Naive thymus-derived CD4-positive, alpha-beta T cell (primary cell): ENCODE measurements at regions of chr7 and their contacts with region 1.

Region 1: DNA sequence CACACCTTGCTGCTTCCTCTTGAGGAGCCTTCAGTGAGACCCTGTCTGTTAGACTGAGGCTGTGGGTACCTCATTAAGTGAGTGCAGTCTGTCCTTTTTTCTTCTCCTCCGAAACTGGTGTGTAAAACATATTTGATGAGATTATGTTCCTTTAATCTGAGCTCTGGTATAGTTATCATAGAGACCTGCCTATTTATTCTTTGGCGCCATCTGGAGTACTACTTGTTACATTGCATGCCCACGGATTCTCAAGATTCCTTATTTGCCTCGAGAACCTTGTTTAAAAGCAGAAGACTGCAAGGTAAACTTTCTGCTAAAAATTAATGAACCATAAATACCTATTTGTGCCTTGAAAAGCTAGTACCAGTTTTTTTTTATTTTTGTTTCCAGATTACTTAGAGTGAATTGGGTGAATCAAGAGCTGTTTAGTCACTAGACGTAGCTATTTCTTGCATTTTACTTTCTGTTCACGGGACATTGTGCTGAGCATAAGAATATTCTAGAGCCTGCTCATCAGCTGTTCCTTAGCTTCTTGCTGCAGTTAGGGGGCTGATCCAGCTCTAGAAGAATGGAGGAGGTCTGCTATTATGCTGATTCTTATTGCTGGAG is 16.9 kb upstream of the STMP1 start:
- DNase-seq: peak in 7 of 9 donors; percentile 8 to 50 (median 41)
- ATAC-seq: peak; percentile 88
- H3K4me3 ChIP-seq: no peak overlapping the region
- H3K4me3 Mint-ChIP-seq: no peak overlapping the region
- H3K27ac ChIP-seq: no peak overlapping the region
- H3K27ac Mint-ChIP-seq: peak overlapping the region in 4 of 9 donors; percentile 1 to 27 (median 20)
- H3K4me1 ChIP-seq: no peaks in the 10 kb centered on the region
- H3K4me1 Mint-ChIP-seq: peaks cover 0 to 7% (median 0%) of the 10 kb centered on the region in 7 donors
- H3K27me3 ChIP-seq: no peaks in the 10 kb centered on the region
- H3K27me3 Mint-ChIP-seq: no peaks in the 10 kb centered on the region

Region 2: GRCh38 chr7:135077642-135078041 is 567.8 kb before region 1 on chr7:
- CTCF ChIA-PET with region 1: no interaction called
- POLR2A ChIA-PET with region 1: no interaction called
- intact Hi-C with region 1: no loop called
- DNase-seq: no peak
- ATAC-seq: no peak
- H3K4me3 ChIP-seq: no peak overlapping the region
- H3K4me3 Mint-ChIP-seq: no peak overlapping the region
- H3K27ac ChIP-seq: no peak overlapping the region
- H3K27ac Mint-ChIP-seq: no peak overlapping the region
- H3K4me1 ChIP-seq: no peaks in the 10 kb centered on the region
- H3K4me1 Mint-ChIP-seq: peaks cover 0 to 1% (median 0%) of the 10 kb centered on the region in 7 donors
- H3K27me3 ChIP-seq: no peaks in the 10 kb centered on the region
- H3K27me3 Mint-ChIP-seq: no peaks in the 10 kb centered on the region

Region 3: DNA sequence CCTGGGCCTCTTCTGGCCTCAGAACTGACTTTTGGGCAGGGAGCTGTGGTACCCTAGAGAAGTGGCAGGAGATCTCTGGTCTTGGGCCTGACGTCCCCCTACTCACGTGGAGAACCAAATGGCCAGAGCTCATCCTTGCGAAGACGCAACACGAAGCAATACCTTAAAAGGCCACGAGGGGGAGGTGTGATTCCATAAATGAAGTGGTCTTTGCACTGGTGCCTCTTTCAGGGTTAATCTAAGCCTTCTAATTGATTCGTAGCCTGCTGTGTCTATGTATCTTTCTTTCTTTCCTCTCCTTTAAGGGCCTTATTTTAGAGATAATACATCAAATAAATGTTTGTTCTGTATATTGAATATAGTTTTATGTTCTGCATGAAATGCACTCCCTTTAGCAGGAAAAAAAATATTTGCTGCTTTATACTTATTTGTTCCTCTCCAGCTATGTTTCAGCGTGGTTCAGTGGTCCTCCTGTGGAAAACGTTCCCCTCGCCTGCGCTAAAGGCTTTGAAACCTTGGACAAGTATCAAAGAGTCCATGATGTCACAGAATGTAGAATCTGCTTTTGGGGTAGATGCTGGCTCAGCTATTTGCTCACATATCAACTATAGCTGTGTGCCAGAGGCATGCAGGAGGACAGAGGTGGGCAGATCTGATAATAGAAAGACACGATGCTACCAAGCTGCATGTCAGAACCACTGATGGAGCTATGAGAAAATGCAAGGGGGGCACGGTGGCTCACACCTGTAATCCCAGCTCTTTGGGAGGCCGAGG is 370.7 kb before region 1 on chr7:
- CTCF ChIA-PET with region 1: interaction called, 38 read pairs
- POLR2A ChIA-PET with region 1: no interaction called
- intact Hi-C with region 1: loop called in 1 of 2 experiments (anchors 1 kb)
- DNase-seq: peak; percentile 27 to 74 (median 55)
- ATAC-seq: peak; percentile 81
- H3K4me3 ChIP-seq: no peak overlapping the region
- H3K4me3 Mint-ChIP-seq: no peak overlapping the region
- H3K27ac ChIP-seq: no peak overlapping the region
- H3K27ac Mint-ChIP-seq: no peak overlapping the region
- H3K4me1 ChIP-seq: no peaks in the 10 kb centered on the region
- H3K4me1 Mint-ChIP-seq: peaks cover 0 to 4% (median 0%) of the 10 kb centered on the region in 7 donors
- H3K27me3 ChIP-seq: no peaks in the 10 kb centered on the region
- H3K27me3 Mint-ChIP-seq: peaks cover 0 to 8% (median 4%) of the 10 kb centered on the region in 5 donors

Region 4: DNA sequence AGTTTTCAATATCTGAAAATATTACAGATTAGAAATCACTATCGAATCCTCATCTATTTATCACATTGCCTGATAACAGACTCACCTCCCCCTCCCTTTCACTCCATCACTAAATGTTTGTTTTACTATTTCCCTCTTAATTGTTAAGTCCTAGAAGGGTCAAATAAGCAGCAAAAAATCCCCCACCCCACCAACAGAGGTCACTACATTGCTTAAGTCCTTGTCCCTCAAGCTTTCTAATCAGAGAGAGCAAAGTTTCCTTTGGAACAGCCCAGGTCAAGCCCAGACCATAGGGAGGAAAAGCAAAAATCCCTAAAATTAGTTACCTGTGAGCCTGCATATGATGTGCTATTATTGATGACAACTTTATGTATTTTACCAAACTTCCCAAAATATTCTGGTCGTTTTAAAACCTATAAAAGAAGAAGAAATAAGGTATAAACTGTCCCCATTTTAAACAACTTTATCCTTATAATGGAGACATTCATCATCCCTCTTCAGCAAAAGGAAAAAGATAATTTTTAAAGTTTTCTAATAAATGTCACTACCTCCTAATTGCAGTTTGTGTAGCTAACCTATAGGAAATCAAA is 230.5 kb before region 1 on chr7:
- CTCF ChIA-PET with region 1: no interaction called
- POLR2A ChIA-PET with region 1: no interaction called
- intact Hi-C with region 1: loop called in 1 of 2 experiments (anchors 10 kb)
- DNase-seq: peak in 4 of 9 donors; percentile 1 to 7 (median 5)
- ATAC-seq: peak; percentile 49
- H3K4me3 ChIP-seq: no peak overlapping the region
- H3K4me3 Mint-ChIP-seq: no peak overlapping the region
- H3K27ac ChIP-seq: no peak overlapping the region
- H3K27ac Mint-ChIP-seq: no peak overlapping the region
- H3K4me1 ChIP-seq: no peaks in the 10 kb centered on the region
- H3K4me1 Mint-ChIP-seq: peaks cover 0 to 19% (median 5%) of the 10 kb centered on the region in 7 donors
- H3K27me3 ChIP-seq: no peaks in the 10 kb centered on the region
- H3K27me3 Mint-ChIP-seq: no peaks in the 10 kb centered on the region

Region 5: GRCh38 chr7:135620980-135621850 is 24.2 kb before region 1 on chr7:
- CTCF ChIA-PET with region 1: interaction called, 12 read pairs
- POLR2A ChIA-PET with region 1: no interaction called
- intact Hi-C with region 1: loop called (anchors 1 to 2 kb)
- DNase-seq: peak in 6 of 9 donors; percentile 17 to 48 (median 33)
- ATAC-seq: peak; percentile 65
- H3K4me3 ChIP-seq: no peak overlapping the region
- H3K4me3 Mint-ChIP-seq: no peak overlapping the region
- H3K27ac ChIP-seq: no peak overlapping the region
- H3K27ac Mint-ChIP-seq: no peak overlapping the region
- H3K4me1 ChIP-seq: no peaks in the 10 kb centered on the region
- H3K4me1 Mint-ChIP-seq: peaks cover 0 to 3% (median 0%) of the 10 kb centered on the region in 7 donors
- H3K27me3 ChIP-seq: no peaks in the 10 kb centered on the region
- H3K27me3 Mint-ChIP-seq: no peaks in the 10 kb centered on the region

Region 6: DNA sequence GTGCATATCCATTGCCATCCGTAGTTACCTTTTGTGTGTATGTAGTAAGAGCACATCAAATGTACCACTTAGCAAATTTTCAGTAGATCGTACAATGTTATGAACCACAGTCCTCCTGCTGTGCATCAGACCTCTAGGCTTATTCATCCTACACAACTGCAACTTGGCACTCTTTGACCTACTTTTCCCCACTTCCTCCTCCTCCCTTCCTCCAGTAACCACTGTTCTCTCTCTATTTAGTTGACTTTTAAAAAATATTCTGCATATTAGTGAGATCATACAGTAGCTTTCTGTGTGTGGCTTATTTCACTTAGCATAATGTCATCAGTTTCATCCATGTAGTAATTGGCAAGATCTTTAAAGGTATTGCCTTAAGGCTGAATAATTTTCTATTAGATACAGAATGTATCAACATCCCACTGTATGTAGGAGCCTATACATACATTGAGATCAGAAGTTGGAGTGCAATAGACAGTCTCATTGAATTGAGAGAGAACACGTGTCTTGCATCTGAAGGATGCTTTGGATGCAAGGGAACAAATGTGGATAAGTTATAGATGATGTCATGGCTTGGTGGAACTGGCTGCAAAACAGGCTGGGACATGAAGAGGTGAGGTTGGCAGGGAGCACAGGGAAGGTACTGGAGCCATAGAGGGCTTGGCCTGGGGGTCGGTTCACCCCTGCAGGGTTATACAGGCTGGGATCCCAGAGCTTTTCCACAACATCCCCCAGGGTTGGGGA is 186.2 kb after region 1 on chr7:
- CTCF ChIA-PET with region 1: no interaction called
- POLR2A ChIA-PET with region 1: no interaction called
- intact Hi-C with region 1: no loop called
- DNase-seq: no peak
- ATAC-seq: peak; percentile 54
- H3K4me3 ChIP-seq: no peak overlapping the region
- H3K4me3 Mint-ChIP-seq: peak overlapping the region in 1 of 10 donors; percentile 18
- H3K27ac ChIP-seq: no peak overlapping the region
- H3K27ac Mint-ChIP-seq: peak overlapping the region in 1 of 9 donors; percentile 4
- H3K4me1 ChIP-seq: peaks cover 0 to 13% of the 10 kb centered on the region in 2 donors
- H3K4me1 Mint-ChIP-seq: peaks cover 0 to 14% (median 6%) of the 10 kb centered on the region in 7 donors
- H3K27me3 ChIP-seq: no peaks in the 10 kb centered on the region
- H3K27me3 Mint-ChIP-seq: peaks cover 0 to 11% (median 0%) of the 10 kb centered on the region in 5 donors